G401 (cell line): ENCODE measurements at regions of chr2 and their contacts with region 1.

Region 1: GRCh38 chr2:208101716-208102631 is 22.4 kb downstream of the CRYGD start:
- DNase-seq: peak; percentile 33

Region 2: DNA sequence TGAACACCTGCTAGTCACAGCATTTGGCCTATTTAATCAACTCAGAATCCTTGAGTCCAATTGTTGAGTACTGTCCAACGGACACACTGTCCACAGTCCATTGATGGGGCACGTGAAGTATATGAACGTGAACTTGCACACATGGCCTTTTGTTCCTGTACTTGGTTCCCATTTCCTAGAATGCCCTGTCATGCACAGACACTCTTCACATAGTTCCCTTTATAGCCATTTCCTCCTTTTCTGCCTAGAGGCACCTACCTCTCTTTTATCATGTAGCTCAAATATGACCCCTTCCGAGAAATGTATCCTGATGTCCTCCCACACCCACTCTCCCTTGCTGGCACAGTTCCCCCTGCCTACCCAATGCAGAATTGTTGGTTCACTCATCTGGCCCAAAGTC is 70.2 kb after region 1 on chr2:
- in situ Hi-C with region 1: no loop called
- DNase-seq: no peak

Region 3: GRCh38 chr2:208224802-208225201 is 122.8 kb after region 1 on chr2:
- in situ Hi-C with region 1: loop called (anchors 25 kb)
- DNase-seq: no peak